ENCODE measurements at regions of chr1 and their contacts with region 1.

Region 1: DNA sequence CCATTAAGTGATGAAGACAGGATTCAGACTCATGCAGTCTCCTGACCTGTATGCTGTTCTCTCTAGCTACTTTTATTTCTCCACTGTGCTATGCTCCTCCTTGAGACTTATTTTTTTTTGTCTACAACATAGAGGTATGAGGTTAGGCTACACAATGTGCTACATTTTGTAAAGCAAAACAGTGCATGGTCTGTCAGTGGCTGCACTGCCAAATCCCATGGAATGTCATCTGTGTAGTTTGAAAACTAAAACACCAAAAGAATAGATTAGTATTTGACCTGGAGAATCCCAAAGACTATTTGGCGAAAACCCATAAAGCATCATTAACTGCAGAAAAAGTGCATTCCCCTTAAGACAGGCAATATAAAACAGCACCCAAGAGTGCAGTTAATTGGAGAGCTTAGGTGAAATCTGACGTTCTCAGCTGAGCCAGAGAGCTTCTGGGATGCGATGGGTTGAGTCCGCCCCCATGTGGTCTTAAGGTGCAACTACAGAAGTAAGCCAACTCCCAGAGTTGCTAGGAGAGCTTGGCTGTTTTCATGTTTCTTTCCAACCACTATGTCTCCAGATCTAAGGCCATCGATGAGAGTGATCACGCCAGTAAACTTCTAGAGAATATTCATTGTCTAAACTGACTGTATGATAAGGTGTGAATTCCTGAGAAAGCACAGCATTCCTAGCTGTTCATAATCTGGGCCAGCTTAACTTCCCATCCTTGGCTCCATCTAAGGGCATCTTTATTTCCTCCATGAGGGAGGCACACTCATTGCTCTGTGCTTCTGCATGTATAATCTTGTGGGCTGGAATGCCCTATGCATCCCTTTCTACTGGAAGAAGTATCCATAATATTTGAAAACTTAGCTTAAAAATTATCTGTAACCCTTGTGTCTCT is 20.7 kb upstream of the CYP2J2 start:
- DNase-seq: peak; percentile 71
- ATAC-seq: peak; percentile 91

Region 2: DNA sequence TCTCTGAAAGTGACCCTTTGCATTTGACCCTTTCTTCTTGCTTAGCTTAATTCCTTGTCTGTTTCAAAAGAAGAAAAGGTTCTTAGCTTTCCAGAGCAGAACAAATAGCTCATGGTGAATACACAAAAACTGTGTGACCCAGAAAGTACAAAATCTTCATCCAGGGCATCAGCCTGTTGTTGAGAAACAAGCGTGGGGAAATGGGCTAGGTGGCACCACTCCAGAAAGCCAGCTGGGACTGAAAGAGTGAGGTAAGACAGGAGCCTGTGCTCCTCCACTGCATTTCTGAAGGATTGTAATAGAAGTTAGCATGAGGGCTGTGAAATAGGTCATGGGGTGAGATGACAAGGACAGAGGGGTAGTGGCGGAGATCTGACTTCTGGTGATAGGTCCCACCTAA is 66.6 kb before region 1 on chr1:
- intact Hi-C with region 1: loop called (anchors 10 kb)
- DNase-seq: no peak
- ATAC-seq: no peak

Region 3: DNA sequence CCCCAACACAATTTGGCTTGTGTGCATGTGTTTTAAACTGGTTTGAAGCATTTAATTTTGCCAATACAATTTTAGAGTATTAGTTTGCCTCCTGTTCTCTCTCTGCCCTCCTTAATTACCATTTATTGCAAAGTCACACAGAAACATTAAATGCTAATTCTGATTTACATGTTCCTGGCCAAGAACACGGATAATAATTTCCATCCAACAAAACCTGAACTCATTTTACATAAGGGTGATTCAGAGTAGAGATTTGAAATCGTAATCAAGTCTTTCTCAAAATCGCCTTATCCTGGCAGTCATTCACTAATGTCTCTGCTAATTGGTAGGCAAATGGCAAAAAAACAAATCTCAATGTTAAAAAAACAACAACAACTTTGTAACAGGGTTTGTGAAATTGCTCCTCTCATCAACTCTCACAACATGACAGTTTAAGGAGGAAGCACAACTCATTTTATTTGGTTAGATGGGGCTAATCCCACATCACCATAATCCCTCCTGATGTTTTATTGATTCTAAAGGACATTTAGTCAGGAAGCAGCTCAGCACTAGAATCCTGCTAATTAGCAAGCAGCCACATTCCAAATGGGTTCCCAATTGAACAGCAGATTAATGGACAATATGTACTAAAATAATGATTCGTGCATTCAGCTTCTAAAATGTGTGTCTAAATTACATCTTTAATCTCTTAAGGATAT is 70.4 kb after region 1 on chr1:
- intact Hi-C with region 1: no loop called
- DNase-seq: no peak
- ATAC-seq: no peak